A549 (cell line): ENCODE measurements at regions of chr4 and their contacts with region 1.

Region 1: GRCh38 chr4:150867148-150867547 is 147.9 kb downstream of the LRBA start:
- DNase-seq: peak; percentile 58 to 77
- ATAC-seq: peak; percentile 66 to 80; a peak in 4 of 6 replicates
- H3K4me3 ChIP-seq: no peak overlapping the region
- H3K27ac ChIP-seq: no peak overlapping the region
- H3K4me1 ChIP-seq: no peaks in the 10 kb centered on the region
- CTCF ChIP-seq: peak; percentile 65
- EP300 ChIP-seq: no peak
- POLR2A ChIP-seq: no peak
- RAD21 ChIP-seq: peak; percentile 78 to 86

Region 2: GRCh38 chr4:150297861-150298474 is 569.2 kb before region 1 on chr4:
- CTCF ChIA-PET with region 1: interaction called, 13 read pairs
- POLR2A ChIA-PET with region 1: no interaction called
- DNase-seq: peak in 1 of 2 experiments; percentile 52
- ATAC-seq: peak in 1 of 2 experiments; percentile 71; a peak in 2 of 6 replicates
- H3K4me3 ChIP-seq: no peak overlapping the region
- H3K27ac ChIP-seq: no peak overlapping the region
- H3K4me1 ChIP-seq: peaks cover 12% of the 10 kb centered on the region
- CTCF ChIP-seq: peak; percentile 74
- EP300 ChIP-seq: no peak
- POLR2A ChIP-seq: no peak
- RAD21 ChIP-seq: peak; percentile 81 to 82

Region 3: GRCh38 chr4:150510176-150510865 is 356.8 kb before region 1 on chr4:
- CTCF ChIA-PET with region 1: no interaction called
- POLR2A ChIA-PET with region 1: no interaction called
- DNase-seq: peak; percentile 5 to 48
- ATAC-seq: peak; percentile 90 to 92
- H3K4me3 ChIP-seq: peak overlapping the region; percentile 13; the same call in 1 of the 3 replicates
- H3K27ac ChIP-seq: peak overlapping the region; percentile 71 to 84
- H3K4me1 ChIP-seq: peaks cover 26% of the 10 kb centered on the region
- CTCF ChIP-seq: no peak
- EP300 ChIP-seq: peak; percentile 39 to 62; a peak in 3 of 5 replicates
- POLR2A ChIP-seq: no peak
- RAD21 ChIP-seq: peak in 1 of 2 experiments; percentile 24; a peak in 2 of 5 replicates

Region 4: DNA sequence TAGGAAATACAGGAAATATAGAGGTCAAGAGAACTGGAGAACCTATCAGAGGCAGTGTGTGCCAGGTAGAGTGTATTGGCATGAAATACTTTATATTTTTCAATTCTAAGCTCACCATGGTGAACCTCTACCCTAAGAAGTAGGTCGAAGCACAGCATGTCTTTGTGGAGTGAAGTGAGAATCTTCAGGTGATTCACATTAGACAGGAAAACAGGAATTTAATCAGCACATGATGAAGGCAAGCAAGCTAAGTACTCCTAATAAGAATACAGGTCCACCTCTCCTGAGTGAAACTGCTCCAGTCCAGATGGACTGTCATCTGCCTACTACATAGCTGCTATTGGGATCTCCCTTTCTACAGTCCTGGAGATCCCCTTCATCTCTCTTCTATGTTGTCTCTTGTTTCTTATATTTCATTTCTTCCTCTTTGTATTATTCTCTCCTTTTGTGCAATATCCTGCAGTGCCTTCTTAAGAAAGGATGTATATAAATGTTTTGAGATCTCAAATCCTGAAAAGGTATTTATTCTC is 11.1 kb before region 1 on chr4:
- CTCF ChIA-PET with region 1: interaction called, 13 read pairs
- POLR2A ChIA-PET with region 1: no interaction called
- DNase-seq: no peak
- ATAC-seq: no peak
- H3K4me3 ChIP-seq: no peak overlapping the region
- H3K27ac ChIP-seq: no peak overlapping the region
- H3K4me1 ChIP-seq: no peaks in the 10 kb centered on the region
- CTCF ChIP-seq: no peak
- EP300 ChIP-seq: no peak
- POLR2A ChIP-seq: no peak
- RAD21 ChIP-seq: no peak

Region 5: GRCh38 chr4:152045807-152046571 is 1178.8 kb after region 1 on chr4:
- CTCF ChIA-PET with region 1: no interaction called
- POLR2A ChIA-PET with region 1: no interaction called
- DNase-seq: peak; percentile 25 to 29
- ATAC-seq: peak; percentile 85 to 93; a peak in 5 of 6 replicates
- H3K4me3 ChIP-seq: peak overlapping the region; percentile 33; the same call in 2 of the 3 replicates
- H3K27ac ChIP-seq: no peak overlapping the region
- H3K4me1 ChIP-seq: no peaks in the 10 kb centered on the region; the same call in 2 of the 3 replicates
- CTCF ChIP-seq: peak; percentile 42; the same call in 2 of the 3 replicates
- EP300 ChIP-seq: no peak
- POLR2A ChIP-seq: no peak
- RAD21 ChIP-seq: peak; percentile 41 to 44; a peak in 4 of 5 replicates